ENCODE measurements at regions of chr10 and their contacts with region 1.

Region 1: GRCh38 chr10:92914478-92915325 is 66.4 kb downstream of the EXOC6 start:
- DNase-seq: peak; percentile 68
- H3K4me3 ChIP-seq: no peak overlapping the region
- H3K27ac ChIP-seq: no peak overlapping the region
- H3K4me1 ChIP-seq: no peaks in the 10 kb centered on the region
- CTCF ChIP-seq: peak; percentile 93

Region 2: DNA sequence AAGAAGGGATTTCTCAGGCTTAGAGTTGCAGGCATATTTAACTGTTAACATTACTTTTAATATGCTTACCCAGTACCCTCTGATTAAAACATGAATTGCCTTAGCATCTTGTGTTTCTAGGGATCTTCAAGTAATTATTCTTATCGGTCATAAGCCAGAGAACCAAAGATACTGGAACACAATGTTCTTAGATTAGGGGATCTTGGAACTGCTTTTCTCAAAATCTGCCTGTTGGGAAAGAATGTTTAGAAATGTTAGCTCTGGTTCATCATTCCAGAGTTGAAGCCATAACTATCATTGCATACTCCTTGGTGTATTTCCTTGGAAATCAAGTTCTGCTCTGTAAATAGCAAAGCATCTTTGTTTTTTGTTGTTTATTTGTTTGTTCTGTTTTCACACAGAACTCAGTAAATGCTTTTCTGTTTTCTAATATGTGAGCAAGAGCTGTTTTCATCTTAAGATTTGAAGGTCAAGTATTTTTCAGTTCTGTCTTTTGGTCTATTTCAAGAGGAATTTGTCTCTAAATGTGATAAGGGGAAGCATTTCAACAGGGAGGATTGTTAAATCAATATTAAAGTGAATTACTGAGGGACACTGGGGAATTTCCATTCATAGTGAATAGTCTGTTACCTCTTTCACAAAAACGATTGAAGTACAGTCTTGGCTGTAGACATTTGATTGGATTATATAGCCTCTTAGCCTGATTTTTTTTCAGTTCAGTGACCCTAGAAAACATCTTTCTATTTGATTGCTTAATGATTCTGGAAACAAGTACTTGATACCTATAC is 42.7 kb after region 1 on chr10:
- CTCF ChIA-PET with region 1: no interaction called
- POLR2A ChIA-PET with region 1: no interaction called
- intact Hi-C with region 1: loop called (anchors 5 kb)
- DNase-seq: no peak
- H3K4me3 ChIP-seq: no peak overlapping the region
- H3K27ac ChIP-seq: no peak overlapping the region
- H3K4me1 ChIP-seq: no peaks in the 10 kb centered on the region
- CTCF ChIP-seq: no peak

Measured in OCI-LY7 (cell line).